Left cardiac atrium (tissue), 4 donors: ENCODE measurements at regions of chr4 and their contacts with region 1.

Region 1: DNA sequence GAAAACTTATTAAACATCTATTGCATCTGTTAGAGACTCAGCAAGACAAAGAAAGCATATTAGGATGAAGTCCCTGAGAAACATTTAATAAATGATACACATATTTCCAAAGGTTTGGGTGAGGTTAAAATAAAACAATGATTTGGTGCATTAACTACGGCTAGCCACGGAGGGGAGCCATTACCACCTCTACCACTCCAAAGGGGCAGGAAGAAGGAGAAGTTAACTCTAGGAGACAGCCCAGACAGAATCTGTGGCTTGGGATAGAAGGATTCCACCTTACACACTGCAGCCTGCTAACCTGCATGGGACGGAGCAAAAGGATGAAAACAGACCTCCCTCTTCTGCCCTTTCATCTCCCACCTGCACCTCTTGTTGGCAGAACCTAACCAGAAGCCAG is 189.1 kb upstream of the C1QTNF7 start:
- DNase-seq: no peak
- ATAC-seq: peak; percentile 69 to 72

Region 2: GRCh38 chr4:15396157-15396800 is 157.6 kb after region 1 on chr4:
- intact Hi-C with region 1: loop called in 1 of 2 experiments (anchors 5 kb)
- DNase-seq: no peak
- ATAC-seq: peak in 1 of 2 donors; percentile 33

Region 3: DNA sequence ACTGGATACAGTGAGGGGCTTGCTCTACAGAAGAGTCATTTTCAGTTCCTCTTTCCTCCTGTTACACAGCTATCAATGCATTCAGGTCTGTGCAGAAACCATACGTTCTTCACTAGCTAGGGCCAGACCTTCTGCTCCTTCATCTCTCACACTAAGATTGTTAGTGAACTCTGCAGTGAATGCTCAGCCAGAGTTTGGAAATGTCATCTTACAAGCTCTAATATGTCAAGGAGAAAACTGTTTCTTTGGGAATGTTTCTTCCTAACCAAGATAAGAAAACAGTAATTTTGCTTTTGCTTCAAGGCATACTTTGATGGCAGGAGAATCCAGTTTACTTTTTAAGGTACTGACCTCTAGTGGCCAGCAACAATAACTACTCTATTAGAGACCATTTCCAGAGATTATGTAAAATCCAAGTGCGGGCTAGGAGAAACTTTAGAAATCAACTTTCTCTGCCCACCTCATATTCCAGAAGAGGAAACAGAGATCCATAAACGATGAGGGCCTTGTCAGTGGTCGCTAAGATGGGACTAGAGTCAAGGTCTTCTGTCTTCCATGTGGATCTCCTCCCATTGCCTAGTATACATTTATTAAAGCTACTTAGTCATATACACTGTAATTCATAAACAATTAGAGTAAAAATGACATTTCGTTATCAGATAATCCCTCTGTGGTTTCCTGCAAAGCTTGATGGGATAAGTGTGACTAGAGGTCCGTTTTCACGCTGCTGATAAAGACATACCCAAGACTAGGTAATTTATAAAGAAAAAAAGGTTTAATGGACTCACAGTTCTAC is 218.9 kb after region 1 on chr4:
- intact Hi-C with region 1: loop called (anchors 2 to 5 kb)
- DNase-seq: no peak
- ATAC-seq: peak; percentile 39 to 57

Region 4: DNA sequence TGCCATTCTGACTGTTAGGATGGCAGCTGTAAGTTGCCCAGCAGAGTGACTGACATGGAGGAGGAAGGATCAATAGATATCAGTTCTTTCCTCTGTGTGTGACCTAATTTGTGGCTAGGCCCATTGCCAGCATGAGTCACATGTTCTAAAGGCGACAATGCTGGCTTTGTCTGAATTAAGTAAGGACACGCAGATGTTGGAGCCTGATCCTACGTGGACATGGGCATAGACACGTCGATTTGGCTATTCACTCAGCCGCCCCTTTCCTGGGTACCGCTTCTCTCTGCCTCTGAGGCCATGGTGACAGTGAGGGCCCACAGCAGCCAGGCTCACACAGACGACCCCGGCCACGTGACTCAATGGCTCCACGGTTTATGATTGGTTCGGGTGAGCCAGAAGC is 828.8 kb after region 1 on chr4:
- intact Hi-C with region 1: no loop called
- DNase-seq: no peak
- ATAC-seq: no peak